ENCODE measurements at regions of chr10 and their contacts with region 1.

Region 1: GRCh38 chr10:5629303-5630111 is 36.9 kb downstream of the ASB13 start:
- DNase-seq: no peak
- H3K4me3 ChIP-seq: no peak overlapping the region
- H3K27me3 ChIP-seq: no peaks in the 10 kb centered on the region
- CTCF ChIP-seq: peak; percentile 97

Region 2: DNA sequence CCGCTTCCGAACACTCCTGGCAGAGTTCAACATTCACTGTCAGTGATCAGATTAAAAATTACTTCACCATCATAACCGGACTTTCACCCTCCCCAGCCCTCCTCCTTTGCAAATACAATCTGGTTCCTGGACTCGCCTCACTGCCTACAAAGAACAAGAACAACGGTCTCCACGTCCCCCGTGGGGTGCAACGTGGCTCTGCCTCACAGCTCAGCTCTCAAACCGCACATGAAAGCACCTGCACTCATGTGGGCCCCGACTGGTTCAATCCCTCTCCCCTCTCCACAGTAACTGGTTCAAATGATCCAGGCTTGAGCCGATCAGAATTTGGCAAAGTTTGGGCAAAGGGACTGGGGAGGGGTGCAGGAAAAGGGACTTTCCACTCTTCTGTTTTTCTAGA is 15.9 kb after region 1 on chr10:
- CTCF ChIA-PET with region 1: interaction called, 13 read pairs
- POLR2A ChIA-PET with region 1: no interaction called
- DNase-seq: no peak
- H3K4me3 ChIP-seq: no peak overlapping the region
- H3K27me3 ChIP-seq: no peaks in the 10 kb centered on the region
- CTCF ChIP-seq: no peak

Measured in BJ (cell line).